CD4-positive, alpha-beta T cell (primary cell): ENCODE measurements at regions of chr6 and their contacts with region 1.

Region 1: GRCh38 chr6:57108691-57109090 is 18.7 kb downstream of the ZNF451 start:
- DNase-seq: no peak
- ATAC-seq: no peak
- H3K4me3 ChIP-seq: no peak overlapping the region
- H3K4me3 Mint-ChIP-seq: no peak overlapping the region
- H3K27ac ChIP-seq: no peak overlapping the region
- H3K27ac Mint-ChIP-seq: no peak overlapping the region
- H3K4me1 ChIP-seq: no peaks in the 10 kb centered on the region
- H3K4me1 Mint-ChIP-seq: peaks cover 78% of the 10 kb centered on the region
- H3K27me3 ChIP-seq: no peaks in the 10 kb centered on the region
- H3K27me3 Mint-ChIP-seq: no peaks in the 10 kb centered on the region
- CTCF ChIP-seq: no peak

Region 2: DNA sequence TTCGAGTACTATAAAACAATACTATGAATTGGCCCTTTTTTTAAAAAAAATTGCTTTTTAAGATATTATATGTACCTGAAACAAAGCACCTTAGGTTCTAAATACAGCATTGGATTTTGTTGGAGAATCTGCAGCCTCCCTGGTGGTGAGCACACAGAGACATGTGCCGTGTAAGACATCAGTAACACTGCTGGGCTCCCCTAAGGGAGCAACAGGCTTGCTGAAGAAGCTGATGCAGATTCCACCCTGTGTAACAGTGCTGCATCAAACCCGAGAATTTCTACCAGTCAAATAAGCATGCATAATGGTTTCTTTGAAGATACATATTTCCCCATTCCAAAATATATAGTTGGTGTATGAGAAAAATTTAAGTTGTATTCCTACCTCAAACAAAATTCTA is 44.8 kb before region 1 on chr6:
- CTCF ChIA-PET with region 1: no interaction called
- POLR2A ChIA-PET with region 1: no interaction called
- intact Hi-C with region 1: no loop called
- DNase-seq: no peak
- ATAC-seq: no peak
- H3K4me3 ChIP-seq: no peak overlapping the region
- H3K4me3 Mint-ChIP-seq: no peak overlapping the region
- H3K27ac ChIP-seq: no peak overlapping the region
- H3K27ac Mint-ChIP-seq: no peak overlapping the region
- H3K4me1 ChIP-seq: no peaks in the 10 kb centered on the region
- H3K4me1 Mint-ChIP-seq: peaks cover 4% of the 10 kb centered on the region
- H3K27me3 ChIP-seq: no peaks in the 10 kb centered on the region
- H3K27me3 Mint-ChIP-seq: no peaks in the 10 kb centered on the region
- CTCF ChIP-seq: no peak

Region 3: GRCh38 chr6:57147955-57148858 is 39.5 kb after region 1 on chr6:
- CTCF ChIA-PET with region 1: no interaction called
- POLR2A ChIA-PET with region 1: no interaction called
- intact Hi-C with region 1: loop called (anchors 5 to 10 kb)
- DNase-seq: no peak
- ATAC-seq: no peak
- H3K4me3 ChIP-seq: no peak overlapping the region
- H3K4me3 Mint-ChIP-seq: no peak overlapping the region
- H3K27ac ChIP-seq: no peak overlapping the region
- H3K27ac Mint-ChIP-seq: no peak overlapping the region
- H3K4me1 ChIP-seq: no peaks in the 10 kb centered on the region
- H3K4me1 Mint-ChIP-seq: peaks cover 12% of the 10 kb centered on the region
- H3K27me3 ChIP-seq: no peaks in the 10 kb centered on the region
- H3K27me3 Mint-ChIP-seq: no peaks in the 10 kb centered on the region
- CTCF ChIP-seq: no peak

Region 4: DNA sequence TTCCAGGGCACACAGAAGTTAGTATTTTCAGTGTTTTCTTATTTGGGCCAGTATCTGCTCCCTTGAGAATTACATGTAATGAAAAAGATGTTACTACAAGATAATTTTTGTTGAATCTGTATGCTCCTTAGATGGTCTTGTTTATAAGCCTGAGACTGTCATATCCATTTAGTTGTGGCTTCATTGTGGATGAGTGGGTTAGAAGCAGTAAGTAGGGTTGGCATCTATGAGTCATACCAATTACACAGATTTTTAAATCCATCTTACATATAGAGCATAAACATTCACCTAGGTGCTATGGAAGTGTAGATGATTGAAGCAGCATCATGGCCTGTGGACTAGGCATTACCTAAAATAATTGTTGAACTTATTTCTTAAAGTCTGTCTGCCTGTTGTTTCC is 50.0 kb after region 1 on chr6:
- CTCF ChIA-PET with region 1: no interaction called
- POLR2A ChIA-PET with region 1: no interaction called
- intact Hi-C with region 1: loop called in 1 of 2 experiments (anchors 10 kb)
- DNase-seq: no peak
- ATAC-seq: no peak
- H3K4me3 ChIP-seq: no peak overlapping the region
- H3K4me3 Mint-ChIP-seq: no peak overlapping the region
- H3K27ac ChIP-seq: no peak overlapping the region
- H3K27ac Mint-ChIP-seq: no peak overlapping the region
- H3K4me1 ChIP-seq: no peaks in the 10 kb centered on the region
- H3K4me1 Mint-ChIP-seq: no peaks in the 10 kb centered on the region
- H3K27me3 ChIP-seq: no peaks in the 10 kb centered on the region
- H3K27me3 Mint-ChIP-seq: no peaks in the 10 kb centered on the region
- CTCF ChIP-seq: no peak